CD8-positive, alpha-beta memory T cell (primary cell): ENCODE measurements at regions of chr1 and their contacts with region 1.

Region 1: GRCh38 chr1:147892731-147893214 is 9.8 kb upstream of the GJA8 start:
- DNase-seq: peak in 3 of 5 donors; percentile 10 to 52 (median 25)
- H3K4me3 ChIP-seq: no peak overlapping the region
- H3K4me3 Mint-ChIP-seq: no peak overlapping the region
- H3K27ac ChIP-seq: no peak overlapping the region
- H3K27ac Mint-ChIP-seq: no peak overlapping the region
- H3K4me1 ChIP-seq: no peaks in the 10 kb centered on the region
- H3K4me1 Mint-ChIP-seq: peaks cover 0 to 4% (median 3%) of the 10 kb centered on the region in 3 donors
- H3K27me3 ChIP-seq: no peaks in the 10 kb centered on the region
- H3K27me3 Mint-ChIP-seq: peaks cover 5 to 13% of the 10 kb centered on the region in 2 donors

Region 2: DNA sequence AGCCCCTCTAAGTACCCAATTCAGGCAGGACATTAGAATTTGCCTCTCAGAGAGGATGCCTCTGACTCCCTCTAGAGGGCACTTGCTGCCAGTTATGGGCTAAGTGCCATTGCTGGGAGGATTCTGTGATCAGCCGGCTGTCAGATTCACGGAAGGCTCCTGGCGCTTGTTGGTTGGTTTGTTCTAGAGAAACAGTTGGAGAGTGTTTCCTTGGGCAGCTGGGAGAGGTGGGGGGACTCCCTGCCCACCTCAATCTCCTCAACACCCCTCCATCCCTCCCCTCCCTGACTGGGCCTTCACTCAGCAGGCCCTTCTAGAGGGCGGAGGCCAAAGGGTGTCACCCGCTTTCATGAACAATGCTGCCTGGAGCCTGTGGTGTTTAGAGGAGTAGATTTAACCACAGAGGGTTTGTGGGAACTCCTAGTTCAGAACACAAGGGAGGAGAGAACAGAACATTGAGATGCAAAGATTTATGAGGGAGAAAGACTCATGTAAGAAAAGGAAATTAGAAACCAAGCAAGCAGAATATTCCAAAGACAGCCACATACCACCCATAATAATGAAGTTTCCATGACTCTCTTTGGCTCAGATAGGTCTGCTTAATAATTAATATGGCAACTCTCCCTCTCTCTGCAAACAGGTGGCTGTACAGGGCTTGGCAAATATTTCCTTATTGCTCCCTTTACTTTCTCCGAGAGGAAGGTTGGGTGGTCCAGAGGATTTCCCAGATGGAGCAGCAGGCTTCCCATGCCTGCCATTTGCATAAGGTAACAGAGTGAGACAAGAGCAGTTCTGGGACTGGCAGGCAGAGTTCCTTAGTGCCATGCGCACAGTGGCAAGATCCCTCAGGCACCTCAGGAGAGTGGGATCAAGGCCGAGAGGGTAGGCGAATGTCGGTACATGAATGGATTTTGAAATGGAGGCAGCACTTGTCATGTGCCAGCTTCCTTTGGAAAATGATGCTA is 192.4 kb before region 1 on chr1:
- CTCF ChIA-PET with region 1: interaction called, 11 read pairs
- POLR2A ChIA-PET with region 1: no interaction called
- DNase-seq: peak; percentile 10 to 66 (median 44)
- H3K4me3 ChIP-seq: peak overlapping the region; percentile 44
- H3K4me3 Mint-ChIP-seq: peak overlapping the region in 2 of 7 donors; percentile 18 to 46
- H3K27ac ChIP-seq: no peak overlapping the region
- H3K27ac Mint-ChIP-seq: peak overlapping the region in 5 of 8 donors; percentile 6 to 72 (median 54)
- H3K4me1 ChIP-seq: peaks cover 8% of the 10 kb centered on the region
- H3K4me1 Mint-ChIP-seq: peaks cover 4 to 8% (median 5%) of the 10 kb centered on the region in 3 donors
- H3K27me3 ChIP-seq: no peaks in the 10 kb centered on the region
- H3K27me3 Mint-ChIP-seq: peaks cover 12 to 29% of the 10 kb centered on the region in 2 donors

Region 3: GRCh38 chr1:147882535-147882934 is 10.2 kb before region 1 on chr1:
- CTCF ChIA-PET with region 1: interaction called, 14 read pairs
- POLR2A ChIA-PET with region 1: no interaction called
- DNase-seq: no peak
- H3K4me3 ChIP-seq: no peak overlapping the region
- H3K4me3 Mint-ChIP-seq: no peak overlapping the region
- H3K27ac ChIP-seq: no peak overlapping the region
- H3K27ac Mint-ChIP-seq: no peak overlapping the region
- H3K4me1 ChIP-seq: no peaks in the 10 kb centered on the region
- H3K4me1 Mint-ChIP-seq: no peaks in the 10 kb centered on the region
- H3K27me3 ChIP-seq: no peaks in the 10 kb centered on the region
- H3K27me3 Mint-ChIP-seq: peaks cover 12 to 29% of the 10 kb centered on the region in 2 donors